Esophagus muscularis mucosa (tissue), 4 donors: ENCODE measurements at regions of chr11 and their contacts with region 1.

Region 1: DNA sequence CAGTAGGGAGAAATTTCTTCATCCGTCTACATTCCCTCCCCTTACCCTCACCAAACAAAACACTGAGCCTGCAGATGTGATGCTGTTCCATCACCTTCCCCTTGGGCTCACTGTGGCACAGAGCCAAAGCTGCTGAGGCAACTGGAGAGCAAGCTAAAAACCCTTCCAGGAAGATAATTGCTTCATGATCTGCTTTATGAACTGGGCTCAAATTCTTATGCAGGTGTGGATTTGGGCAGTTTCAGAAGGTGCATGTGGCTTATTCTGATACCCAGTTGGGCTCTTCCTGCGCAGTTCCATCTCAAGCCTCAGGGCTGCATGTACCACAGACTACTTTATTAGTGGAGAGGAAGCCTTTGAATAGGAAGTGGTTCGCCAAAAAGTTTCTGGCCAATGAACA is 58.3 kb downstream of the AAMDC start:
- DNase-seq: no peak
- H3K4me3 ChIP-seq: no peak overlapping the region
- H3K27ac ChIP-seq: peak overlapping the region in 2 of 4 donors; percentile 46 to 49
- H3K4me1 ChIP-seq: peaks cover 0 to 42% (median 26%) of the 10 kb centered on the region in 4 donors
- H3K27me3 ChIP-seq: no peaks in the 10 kb centered on the region
- CTCF ChIP-seq: no peak
- EP300 ChIP-seq: no peak
- POLR2A ChIP-seq: no peak

Region 2: GRCh38 chr11:77828926-77829325 is 50.3 kb before region 1 on chr11:
- intact Hi-C with region 1: loop called (anchors 5 kb)
- DNase-seq: no peak
- H3K4me3 ChIP-seq: no peak overlapping the region
- H3K27ac ChIP-seq: no peak overlapping the region
- H3K4me1 ChIP-seq: peaks cover 6 to 14% (median 11%) of the 10 kb centered on the region in 4 donors
- H3K27me3 ChIP-seq: no peaks in the 10 kb centered on the region
- CTCF ChIP-seq: no peak
- EP300 ChIP-seq: no peak
- POLR2A ChIP-seq: no peak